CD4-positive, alpha-beta T cell (primary cell): ENCODE measurements at regions of chrX and their contacts with region 1.

Region 1: DNA sequence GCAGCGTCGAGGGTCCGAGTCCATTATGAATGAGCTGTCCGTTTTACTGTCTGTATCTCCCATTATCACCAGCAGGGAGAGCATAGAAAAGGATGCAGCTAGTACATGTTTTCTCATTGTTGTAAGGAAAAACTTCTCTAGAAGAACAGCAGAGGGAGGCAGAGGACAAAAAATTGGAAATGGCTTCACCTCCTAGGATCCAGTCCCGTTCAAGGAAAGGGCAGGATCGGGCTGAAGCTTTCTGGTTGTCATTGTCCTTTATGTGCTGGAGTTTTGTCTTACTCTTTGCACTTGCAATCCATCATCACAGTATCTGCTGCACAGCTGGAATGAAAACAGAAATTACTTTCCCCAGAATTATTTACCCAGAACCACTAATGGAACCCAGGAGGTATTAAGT is 14.7 kb downstream of the NDP start:
- DNase-seq: peak in 5 of 14 experiments; percentile 6 to 75 (median 63)
- ATAC-seq: peak; percentile 73
- H3K4me3 ChIP-seq: no peak overlapping the region
- H3K4me3 Mint-ChIP-seq: no peak overlapping the region
- H3K27ac ChIP-seq: no peak overlapping the region
- H3K27ac Mint-ChIP-seq: no peak overlapping the region
- H3K4me1 ChIP-seq: peaks cover 3% of the 10 kb centered on the region
- H3K4me1 Mint-ChIP-seq: peaks cover 6% of the 10 kb centered on the region
- H3K27me3 ChIP-seq: no peaks in the 10 kb centered on the region
- H3K27me3 Mint-ChIP-seq: peaks cover 6% of the 10 kb centered on the region
- CTCF ChIP-seq: peak; percentile 77

Region 2: DNA sequence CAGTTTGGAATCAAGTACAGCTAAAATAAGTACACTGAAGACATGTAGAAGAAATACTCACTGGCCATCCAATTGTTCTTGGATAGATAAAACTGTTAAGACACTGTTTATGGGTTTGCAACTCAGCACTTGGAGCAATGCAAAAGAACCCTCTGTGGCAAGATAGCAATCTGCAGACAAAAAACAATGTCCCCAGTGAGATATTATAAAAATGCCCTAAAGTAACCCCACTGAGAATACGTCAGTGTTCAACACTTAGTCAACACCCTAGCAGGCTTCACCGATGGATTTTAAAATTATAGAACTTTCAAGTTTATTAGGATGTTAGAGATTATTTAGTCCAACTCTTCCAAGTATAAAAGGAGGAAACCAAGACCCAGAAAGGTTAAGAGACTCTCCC is 62.2 kb after region 1 on chrX:
- CTCF ChIA-PET with region 1: no interaction called
- POLR2A ChIA-PET with region 1: no interaction called
- intact Hi-C with region 1: loop called in 1 of 2 experiments (anchors 5 kb)
- DNase-seq: no peak
- ATAC-seq: no peak
- H3K4me3 ChIP-seq: no peak overlapping the region
- H3K4me3 Mint-ChIP-seq: no peak overlapping the region
- H3K27ac ChIP-seq: no peak overlapping the region
- H3K27ac Mint-ChIP-seq: no peak overlapping the region
- H3K4me1 ChIP-seq: no peaks in the 10 kb centered on the region
- H3K4me1 Mint-ChIP-seq: no peaks in the 10 kb centered on the region
- H3K27me3 ChIP-seq: no peaks in the 10 kb centered on the region
- H3K27me3 Mint-ChIP-seq: no peaks in the 10 kb centered on the region
- CTCF ChIP-seq: no peak

Region 3: DNA sequence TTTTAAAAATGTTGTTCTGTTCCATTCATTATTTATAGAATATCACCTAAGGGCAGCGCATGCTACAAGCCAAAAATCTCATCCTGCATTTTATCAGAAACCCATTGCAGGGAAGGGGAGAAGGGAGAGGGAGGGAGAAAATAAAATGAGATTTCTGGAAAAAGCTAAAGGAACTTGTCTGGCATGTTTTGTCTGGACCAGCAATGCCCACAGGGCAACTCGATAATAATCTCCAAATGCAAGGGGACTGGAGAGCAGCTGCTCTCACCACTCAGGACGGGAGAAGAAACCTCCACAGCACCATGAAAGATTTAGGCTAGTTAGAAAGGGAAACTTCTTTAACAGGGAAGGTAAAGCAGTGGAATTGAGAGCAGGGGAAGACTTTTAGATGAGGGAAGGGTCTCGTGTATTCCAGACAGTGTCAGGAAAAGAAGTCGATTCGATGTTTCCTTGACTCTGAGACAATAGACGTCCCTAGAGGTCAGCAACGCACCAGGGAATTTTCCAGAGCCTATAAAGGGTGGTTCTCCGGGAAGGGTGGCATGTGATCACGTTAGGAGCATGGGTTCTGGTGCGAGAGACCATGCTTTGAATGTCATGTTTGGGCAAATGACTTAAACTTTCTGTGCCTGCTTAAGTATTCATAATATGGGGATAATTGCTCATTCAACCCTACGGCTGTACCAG is 146.8 kb after region 1 on chrX:
- CTCF ChIA-PET with region 1: no interaction called
- POLR2A ChIA-PET with region 1: no interaction called
- intact Hi-C with region 1: no loop called
- DNase-seq: no peak
- ATAC-seq: no peak
- H3K4me3 ChIP-seq: no peak overlapping the region
- H3K4me3 Mint-ChIP-seq: no peak overlapping the region
- H3K27ac ChIP-seq: no peak overlapping the region
- H3K27ac Mint-ChIP-seq: no peak overlapping the region
- H3K4me1 ChIP-seq: no peaks in the 10 kb centered on the region
- H3K4me1 Mint-ChIP-seq: no peaks in the 10 kb centered on the region
- H3K27me3 ChIP-seq: no peaks in the 10 kb centered on the region
- H3K27me3 Mint-ChIP-seq: no peaks in the 10 kb centered on the region
- CTCF ChIP-seq: no peak

Region 4: DNA sequence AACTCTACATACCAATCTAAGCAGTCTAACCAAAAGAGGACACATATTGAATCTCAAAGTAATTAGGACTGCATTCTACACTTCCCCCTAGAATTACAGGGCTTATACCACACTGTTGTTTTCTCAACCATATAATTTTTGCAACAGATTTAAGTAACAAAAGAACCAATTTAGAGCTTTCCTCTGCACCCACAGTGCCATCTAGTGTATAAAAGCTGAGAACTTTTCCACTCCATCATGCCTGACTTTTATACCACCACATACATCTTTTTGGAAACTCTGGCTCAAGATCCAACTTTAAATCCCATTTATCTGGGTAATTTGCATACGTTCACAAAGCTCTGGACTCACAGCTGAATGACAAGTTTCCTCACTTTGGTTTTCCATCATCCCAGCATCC is 285.5 kb after region 1 on chrX:
- CTCF ChIA-PET with region 1: interaction called, 7 read pairs
- POLR2A ChIA-PET with region 1: interaction called, 6 read pairs
- intact Hi-C with region 1: loop called (anchors 1 to 2 kb)
- DNase-seq: peak in 4 of 14 experiments; percentile 20 to 53 (median 48)
- ATAC-seq: no peak
- H3K4me3 ChIP-seq: no peak overlapping the region
- H3K4me3 Mint-ChIP-seq: no peak overlapping the region
- H3K27ac ChIP-seq: no peak overlapping the region
- H3K27ac Mint-ChIP-seq: peak overlapping the region; percentile 53
- H3K4me1 ChIP-seq: peaks cover 7% of the 10 kb centered on the region
- H3K4me1 Mint-ChIP-seq: peaks cover 39% of the 10 kb centered on the region
- H3K27me3 ChIP-seq: no peaks in the 10 kb centered on the region
- H3K27me3 Mint-ChIP-seq: no peaks in the 10 kb centered on the region
- CTCF ChIP-seq: peak; percentile 65

Region 5: DNA sequence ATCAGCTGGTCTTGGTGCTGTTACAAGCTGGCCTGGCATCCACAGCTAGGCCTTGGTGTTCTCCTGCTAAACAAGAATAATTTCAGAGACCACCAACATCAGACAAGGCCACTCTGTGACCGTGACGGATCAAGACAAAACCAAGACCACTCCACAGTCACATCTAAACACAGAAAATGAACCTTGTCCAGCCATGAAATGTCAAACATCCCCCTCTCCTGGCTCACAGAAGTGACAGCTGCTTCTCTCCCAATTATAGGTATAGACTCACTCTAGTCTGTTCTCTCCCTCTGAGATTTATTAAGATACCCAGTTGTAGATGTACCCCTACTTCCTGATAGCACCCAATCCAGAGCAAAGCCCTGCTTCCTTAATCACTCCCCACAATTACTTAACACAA is 344.6 kb after region 1 on chrX:
- CTCF ChIA-PET with region 1: interaction called, 4 read pairs
- POLR2A ChIA-PET with region 1: no interaction called
- intact Hi-C with region 1: loop called (anchors 2 to 5 kb)
- DNase-seq: peak in 3 of 14 experiments; percentile 11 to 19 (median 15)
- ATAC-seq: no peak
- H3K4me3 ChIP-seq: no peak overlapping the region
- H3K4me3 Mint-ChIP-seq: no peak overlapping the region
- H3K27ac ChIP-seq: no peak overlapping the region
- H3K27ac Mint-ChIP-seq: no peak overlapping the region
- H3K4me1 ChIP-seq: no peaks in the 10 kb centered on the region
- H3K4me1 Mint-ChIP-seq: no peaks in the 10 kb centered on the region
- H3K27me3 ChIP-seq: no peaks in the 10 kb centered on the region
- H3K27me3 Mint-ChIP-seq: no peaks in the 10 kb centered on the region
- CTCF ChIP-seq: peak; percentile 10

Region 6: GRCh38 chrX:44542567-44543325 is 584.2 kb after region 1 on chrX and contains the start of gene FUNDC1:
- CTCF ChIA-PET with region 1: interaction called, 3 read pairs
- POLR2A ChIA-PET with region 1: no interaction called
- intact Hi-C with region 1: loop called (anchors 1 to 2 kb)
- DNase-seq: peak; percentile 77 to 97 (median 90)
- ATAC-seq: peak; percentile 94
- H3K4me3 ChIP-seq: peak within 1 kb of the TSS; percentile 88
- H3K4me3 Mint-ChIP-seq: peak within 1 kb of the TSS; percentile 100
- H3K27ac ChIP-seq: peak within 1 kb of the TSS; percentile 46 to 54
- H3K27ac Mint-ChIP-seq: peak within 1 kb of the TSS; percentile 97
- H3K4me1 ChIP-seq: peaks cover 9% of the 10 kb centered on the region
- H3K4me1 Mint-ChIP-seq: peaks cover 37% of the 10 kb centered on the region
- H3K27me3 ChIP-seq: no peaks in the 10 kb centered on the region
- H3K27me3 Mint-ChIP-seq: no peaks in the 10 kb centered on the region
- CTCF ChIP-seq: no peak
- total RNA-seq, gene FUNDC1: 4.8 to 5.4 TPM

Region 7: GRCh38 chrX:45083314-45083713 is 1124.8 kb after region 1 on chrX:
- CTCF ChIA-PET with region 1: no interaction called
- POLR2A ChIA-PET with region 1: no interaction called
- intact Hi-C with region 1: loop called in 1 of 2 experiments (anchors 10 kb)
- DNase-seq: peak in 4 of 14 experiments; percentile 11 to 57 (median 16)
- ATAC-seq: peak; percentile 54
- H3K4me3 ChIP-seq: no peak overlapping the region
- H3K4me3 Mint-ChIP-seq: no peak overlapping the region
- H3K27ac ChIP-seq: no peak overlapping the region
- H3K27ac Mint-ChIP-seq: no peak overlapping the region
- H3K4me1 ChIP-seq: no peaks in the 10 kb centered on the region
- H3K4me1 Mint-ChIP-seq: peaks cover 15% of the 10 kb centered on the region
- H3K27me3 ChIP-seq: no peaks in the 10 kb centered on the region
- H3K27me3 Mint-ChIP-seq: no peaks in the 10 kb centered on the region
- CTCF ChIP-seq: no peak

Region 8: GRCh38 chrX:45186643-45187026 is 1228.1 kb after region 1 on chrX:
- CTCF ChIA-PET with region 1: no interaction called
- POLR2A ChIA-PET with region 1: no interaction called
- intact Hi-C with region 1: loop called in 1 of 2 experiments (anchors 2 kb)
- DNase-seq: no peak
- ATAC-seq: no peak
- H3K4me3 ChIP-seq: peak overlapping the region; percentile 63
- H3K4me3 Mint-ChIP-seq: peak overlapping the region; percentile 87
- H3K27ac ChIP-seq: no peak overlapping the region
- H3K27ac Mint-ChIP-seq: peak overlapping the region; percentile 29
- H3K4me1 ChIP-seq: peaks cover 4% of the 10 kb centered on the region
- H3K4me1 Mint-ChIP-seq: peaks cover 27% of the 10 kb centered on the region
- H3K27me3 ChIP-seq: no peaks in the 10 kb centered on the region
- H3K27me3 Mint-ChIP-seq: no peaks in the 10 kb centered on the region
- CTCF ChIP-seq: no peak